ENCODE measurements at regions of chr12 and their contacts with region 1.

Region 1: GRCh38 chr12:131065279-131065678 is 111.6 kb downstream of the ADGRD1 start:
- DNase-seq: no peak
- H3K4me3 ChIP-seq: no peak overlapping the region
- H3K27ac ChIP-seq: no peak overlapping the region
- H3K4me1 ChIP-seq: no peaks in the 10 kb centered on the region
- H3K27me3 ChIP-seq: no peaks in the 10 kb centered on the region
- CTCF ChIP-seq: no peak
- POLR2A ChIP-seq: no peak

Region 2: GRCh38 chr12:131035268-131035681 is 30.0 kb before region 1 on chr12:
- CTCF ChIA-PET with region 1: no interaction called
- POLR2A ChIA-PET with region 1: no interaction called
- dilution Hi-C with region 1: no loop called
- intact Hi-C with region 1: no loop called
- DNase-seq: no peak
- H3K4me3 ChIP-seq: no peak overlapping the region
- H3K27ac ChIP-seq: no peak overlapping the region
- H3K4me1 ChIP-seq: no peaks in the 10 kb centered on the region
- H3K27me3 ChIP-seq: no peaks in the 10 kb centered on the region
- CTCF ChIP-seq: no peak
- POLR2A ChIP-seq: no peak

Region 3: GRCh38 chr12:131076791-131077747 is 11.8 kb after region 1 on chr12:
- CTCF ChIA-PET with region 1: no interaction called
- POLR2A ChIA-PET with region 1: no interaction called
- dilution Hi-C with region 1: no loop called
- intact Hi-C with region 1: loop called (anchors 1 kb)
- DNase-seq: no peak
- H3K4me3 ChIP-seq: no peak overlapping the region
- H3K27ac ChIP-seq: no peak overlapping the region
- H3K4me1 ChIP-seq: no peaks in the 10 kb centered on the region
- H3K27me3 ChIP-seq: no peaks in the 10 kb centered on the region
- CTCF ChIP-seq: no peak
- POLR2A ChIP-seq: no peak

Measured in endothelial cell of umbilical vein (primary cell).